AG04449 (cell line): ENCODE measurements at regions of chr3 and their contacts with region 1.

Region 1: DNA sequence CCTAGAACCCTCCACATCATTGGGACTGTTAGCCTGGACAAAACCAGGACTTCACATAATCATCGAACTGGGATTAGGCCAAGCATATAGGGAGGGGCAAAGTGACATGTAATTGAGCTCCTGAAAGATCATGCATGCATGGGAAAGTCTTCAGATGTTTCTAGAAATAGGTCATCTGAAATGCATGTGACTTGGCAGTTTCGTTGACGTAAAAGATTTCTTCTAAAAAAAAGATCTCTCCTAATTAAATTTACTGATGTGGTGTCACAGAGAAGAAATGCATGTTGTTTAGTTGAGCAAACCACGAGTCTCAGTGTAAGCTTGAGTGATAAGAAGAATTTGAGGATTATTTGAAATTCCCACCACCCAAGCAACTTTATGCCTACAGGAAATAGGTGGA is 70.0 kb upstream of the LIMD1 start:
- DNase-seq: no peak
- H3K4me3 ChIP-seq: no peak overlapping the region
- CTCF ChIP-seq: no peak

Region 2: GRCh38 chr3:45409921-45410320 is 114.6 kb before region 1 on chr3:
- CTCF ChIA-PET with region 1: no interaction called
- POLR2A ChIA-PET with region 1: no interaction called
- DNase-seq: no peak
- H3K4me3 ChIP-seq: no peak overlapping the region
- CTCF ChIP-seq: no peak

Region 3: DNA sequence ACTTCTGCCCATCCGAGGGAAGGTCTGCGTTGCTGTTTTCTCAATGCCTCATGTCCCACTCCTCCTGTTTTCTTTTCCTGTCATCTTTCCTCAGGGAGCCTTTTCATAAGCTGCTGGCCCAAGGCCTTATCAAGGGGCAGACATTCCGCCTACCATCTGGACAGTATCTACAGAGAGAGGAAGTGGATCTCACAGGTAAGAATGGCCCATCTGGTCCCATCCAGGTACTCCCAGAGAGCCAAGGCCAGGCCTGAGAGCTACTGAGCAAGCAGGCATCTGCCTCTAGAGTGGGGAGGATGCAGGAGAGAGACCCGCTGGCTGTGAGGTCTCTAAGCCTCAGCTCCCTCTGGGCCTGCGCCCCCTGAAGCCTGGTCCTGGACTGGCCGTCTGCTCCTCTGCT is 11.5 kb before region 1 on chr3:
- CTCF ChIA-PET with region 1: interaction called, 15 read pairs
- POLR2A ChIA-PET with region 1: no interaction called
- DNase-seq: no peak
- H3K4me3 ChIP-seq: no peak overlapping the region
- CTCF ChIP-seq: no peak